ENCODE measurements at regions of chr20 and their contacts with region 1.

Region 1: DNA sequence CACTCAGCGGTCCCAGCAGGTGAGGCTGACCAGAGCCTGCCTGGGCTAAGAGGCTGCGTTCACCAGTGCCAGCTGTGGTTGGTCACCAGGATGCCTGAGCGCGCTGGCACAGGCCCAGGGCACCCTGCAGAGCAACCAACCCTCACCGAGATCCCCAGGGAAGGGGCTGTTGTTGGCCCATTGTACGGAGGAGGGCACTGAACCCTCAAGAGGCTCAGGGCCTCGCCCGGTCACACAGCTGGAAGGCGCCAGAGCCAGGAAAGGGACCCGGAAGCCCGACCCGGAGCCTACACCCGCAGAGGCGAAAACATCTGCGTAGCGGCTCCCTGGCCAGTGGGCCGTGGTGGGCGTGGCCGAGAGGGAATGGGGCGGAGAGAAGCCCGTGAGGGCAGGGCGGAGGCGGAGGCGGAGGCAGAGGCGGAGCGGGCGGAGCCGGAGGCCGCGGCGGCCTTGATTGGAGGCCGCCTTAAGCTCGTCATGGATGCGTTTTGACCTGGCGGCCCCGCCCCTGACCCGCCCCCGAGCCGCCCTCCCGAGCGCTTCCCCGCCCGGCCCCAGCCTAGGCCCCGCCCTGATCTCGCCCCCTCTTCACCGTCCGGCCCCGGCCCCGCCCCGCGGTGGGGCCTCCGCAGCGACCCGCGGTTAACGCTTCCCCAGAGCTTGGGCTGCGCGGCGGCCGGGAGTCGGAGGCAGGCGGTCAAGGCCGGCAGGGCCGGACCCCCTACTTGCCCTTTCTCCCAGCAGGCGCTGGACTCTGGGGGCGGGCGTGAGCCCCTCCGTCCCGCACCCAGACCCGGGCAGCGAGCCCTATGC is 2.2 kb upstream of the MRGBP start:
- DNase-seq: peak; percentile 97
- H3K4me3 ChIP-seq: peak overlapping the region; percentile 64 to 87 (median 74)
- H3K27ac ChIP-seq: peak overlapping the region; percentile 94 to 97 (median 96)
- H3K4me1 ChIP-seq: peaks cover 21 to 46% (median 40%) of the 10 kb centered on the region in 4 donors
- H3K27me3 ChIP-seq: no peaks in the 10 kb centered on the region
- CTCF ChIP-seq: peak in 1 of 5 experiments; percentile 20
- EP300 ChIP-seq: no peak
- POLR2A ChIP-seq: peak; percentile 81

Region 2: GRCh38 chr20:62652051-62652926 is 141.8 kb before region 1 on chr20:
- in situ Hi-C with region 1: loop called in 1 of 4 experiments (anchors 25 kb)
- intact Hi-C with region 1: no loop called
- DNase-seq: peak; percentile 94
- H3K4me3 ChIP-seq: peak overlapping the region in 3 of 4 donors; percentile 2 to 35 (median 22)
- H3K27ac ChIP-seq: peak overlapping the region; percentile 92 to 97 (median 94)
- H3K4me1 ChIP-seq: peaks cover 34 to 42% (median 37%) of the 10 kb centered on the region in 4 donors
- H3K27me3 ChIP-seq: no peaks in the 10 kb centered on the region
- CTCF ChIP-seq: peak in 2 of 5 experiments; percentile 43 to 51
- EP300 ChIP-seq: peak; percentile 96
- POLR2A ChIP-seq: peak; percentile 88

Region 3: DNA sequence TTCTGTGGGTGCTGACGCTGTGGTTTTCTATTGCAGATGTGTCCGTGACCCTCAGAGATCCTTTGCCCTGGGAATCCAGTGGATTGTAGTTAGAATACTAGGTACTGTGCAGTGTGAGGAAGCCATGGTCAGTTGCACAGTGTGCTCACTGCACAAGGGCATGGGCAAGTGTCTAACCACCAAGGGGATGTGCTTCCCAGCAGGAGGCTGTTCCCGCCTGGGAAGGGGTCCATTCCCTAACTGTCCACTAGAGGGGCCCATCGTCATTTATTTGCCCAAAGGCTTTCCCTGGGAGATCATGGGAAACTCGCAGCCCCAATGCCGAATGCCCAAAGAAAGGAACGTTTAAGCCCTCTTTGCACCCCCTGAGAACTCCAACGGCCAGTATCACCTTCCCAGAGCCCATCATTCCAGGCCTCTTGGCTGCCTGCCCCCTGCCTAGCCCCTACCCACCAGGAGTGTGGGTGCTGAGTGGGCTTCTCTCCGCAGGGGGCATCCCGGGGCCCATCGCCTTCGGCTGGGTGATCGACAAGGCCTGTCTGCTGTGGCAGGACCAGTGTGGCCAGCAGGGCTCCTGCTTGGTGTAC is 125.6 kb before region 1 on chr20:
- in situ Hi-C with region 1: loop called in 1 of 4 experiments (anchors 25 kb)
- intact Hi-C with region 1: loop called (anchors 2 kb)
- DNase-seq: peak; percentile 81
- H3K4me3 ChIP-seq: no peak overlapping the region
- H3K27ac ChIP-seq: peak overlapping the region in 1 of 4 donors; percentile 81
- H3K4me1 ChIP-seq: peaks cover 8 to 26% (median 20%) of the 10 kb centered on the region in 4 donors
- H3K27me3 ChIP-seq: no peaks in the 10 kb centered on the region
- CTCF ChIP-seq: peak; percentile 81 to 92 (median 86)
- EP300 ChIP-seq: no peak
- POLR2A ChIP-seq: no peak

Region 4: GRCh38 chr20:62685781-62686555 is 108.2 kb before region 1 on chr20:
- in situ Hi-C with region 1: loop called in 1 of 4 experiments (anchors 25 kb)
- intact Hi-C with region 1: no loop called
- DNase-seq: peak; percentile 61
- H3K4me3 ChIP-seq: no peak overlapping the region
- H3K27ac ChIP-seq: peak overlapping the region in 1 of 4 donors; percentile 4
- H3K4me1 ChIP-seq: peaks cover 0 to 13% (median 5%) of the 10 kb centered on the region in 4 donors
- H3K27me3 ChIP-seq: peaks cover 7% of the 10 kb centered on the region
- CTCF ChIP-seq: no peak
- EP300 ChIP-seq: no peak
- POLR2A ChIP-seq: peak; percentile 24

Region 5: GRCh38 chr20:62704301-62704948 is 89.7 kb before region 1 on chr20:
- in situ Hi-C with region 1: loop called in 1 of 4 experiments (anchors 25 kb)
- intact Hi-C with region 1: loop called (anchors 5 kb)
- DNase-seq: peak; percentile 75
- H3K4me3 ChIP-seq: no peak overlapping the region
- H3K27ac ChIP-seq: peak overlapping the region; percentile 42 to 85 (median 67)
- H3K4me1 ChIP-seq: peaks cover 4 to 18% (median 14%) of the 10 kb centered on the region in 4 donors
- H3K27me3 ChIP-seq: peaks cover 31% of the 10 kb centered on the region
- CTCF ChIP-seq: no peak
- EP300 ChIP-seq: no peak
- POLR2A ChIP-seq: no peak

Measured in transverse colon (tissue), 4 donors.